Activated CD4-positive, alpha-beta T cell treated with anti-CD3 and anti-CD28 coated beads for 36 hours (primary cell): ENCODE measurements at regions of chr16 and their contacts with region 1.

Region 1: GRCh38 chr16:65392806-65393565 is 271.1 kb upstream of the CDH11 start:
- DNase-seq: no peak
- ATAC-seq: no peak
- H3K4me3 Mint-ChIP-seq: no peak overlapping the region
- H3K27ac Mint-ChIP-seq: no peak overlapping the region
- H3K4me1 Mint-ChIP-seq: no peaks in the 10 kb centered on the region
- H3K27me3 Mint-ChIP-seq: no peaks in the 10 kb centered on the region

Region 2: GRCh38 chr16:65375651-65376050 is 17.3 kb before region 1 on chr16:
- CTCF ChIA-PET with region 1: no interaction called
- POLR2A ChIA-PET with region 1: no interaction called
- intact Hi-C with region 1: no loop called
- DNase-seq: no peak
- ATAC-seq: no peak
- H3K4me3 Mint-ChIP-seq: no peak overlapping the region
- H3K27ac Mint-ChIP-seq: no peak overlapping the region
- H3K4me1 Mint-ChIP-seq: no peaks in the 10 kb centered on the region
- H3K27me3 Mint-ChIP-seq: no peaks in the 10 kb centered on the region

Region 3: DNA sequence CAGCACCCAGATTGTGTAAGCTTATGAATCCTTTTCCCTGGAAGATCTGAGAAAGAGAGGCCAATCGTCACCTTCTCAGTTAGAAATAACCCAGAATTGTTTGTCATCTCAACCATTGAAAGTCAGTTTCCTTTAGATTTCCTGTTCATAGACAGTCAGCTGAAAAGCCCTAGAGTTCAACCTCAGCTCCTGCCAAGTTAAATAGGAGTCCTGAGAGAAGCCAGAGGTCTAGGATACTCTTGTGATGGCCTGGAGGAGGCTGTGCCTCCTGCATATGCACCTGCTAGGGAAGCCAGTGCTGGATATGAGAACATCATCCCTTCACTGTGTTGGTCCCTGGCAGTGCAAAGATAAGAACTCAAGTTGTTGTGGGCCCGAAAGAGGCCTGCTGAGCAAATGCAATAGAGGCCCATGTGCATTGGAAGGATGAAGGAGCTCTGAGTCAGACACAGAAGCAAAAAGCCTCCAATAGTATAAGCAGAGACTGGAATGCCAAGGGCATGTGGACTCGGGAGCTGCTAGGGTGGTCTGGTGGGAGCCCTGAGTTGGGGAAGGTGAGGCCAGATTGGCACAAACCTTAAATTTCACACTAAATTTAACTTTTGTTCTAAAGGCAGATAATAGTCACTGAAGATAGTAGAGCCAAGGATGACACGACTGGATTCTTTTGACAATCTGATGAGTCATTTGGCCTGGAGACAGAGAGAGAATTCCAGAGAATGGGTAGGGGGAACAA is 452.6 kb after region 1 on chr16:
- CTCF ChIA-PET with region 1: no interaction called
- POLR2A ChIA-PET with region 1: interaction called, 13 read pairs
- intact Hi-C with region 1: no loop called
- DNase-seq: no peak
- ATAC-seq: no peak
- H3K4me3 Mint-ChIP-seq: no peak overlapping the region
- H3K27ac Mint-ChIP-seq: no peak overlapping the region
- H3K4me1 Mint-ChIP-seq: no peaks in the 10 kb centered on the region
- H3K27me3 Mint-ChIP-seq: peaks cover 5% of the 10 kb centered on the region

Region 4: GRCh38 chr16:66814734-66815133 is 1421.7 kb after region 1 on chr16:
- CTCF ChIA-PET with region 1: no interaction called
- POLR2A ChIA-PET with region 1: no interaction called
- intact Hi-C with region 1: no loop called
- DNase-seq: no peak
- ATAC-seq: no peak
- H3K4me3 Mint-ChIP-seq: no peak overlapping the region
- H3K27ac Mint-ChIP-seq: no peak overlapping the region
- H3K4me1 Mint-ChIP-seq: no peaks in the 10 kb centered on the region
- H3K27me3 Mint-ChIP-seq: no peaks in the 10 kb centered on the region